Endothelial cell of umbilical vein (primary cell): ENCODE measurements at regions of chr1 and their contacts with region 1.

Region 1: GRCh38 chr1:165827268-165828102 is at the start of gene UCK2:
- DNase-seq: peak; percentile 81
- H3K4me3 ChIP-seq: peak within 1 kb of the TSS; percentile 77 to 93 (median 86)
- H3K27ac ChIP-seq: peak within 1 kb of the TSS; percentile 95
- H3K4me1 ChIP-seq: peaks cover 13% of the 10 kb centered on the region
- H3K27me3 ChIP-seq: no peaks in the 10 kb centered on the region
- CTCF ChIP-seq: peak in 1 of 2 donors; percentile 29
- POLR2A ChIP-seq: peak; percentile 49
- total RNA-seq, gene UCK2: 62.3 and 68.4 TPM in 2 replicates

Region 2: GRCh38 chr1:165630629-165631341 is 196.7 kb before region 1 on chr1 and contains the start of gene MGST3:
- CTCF ChIA-PET with region 1: no interaction called
- POLR2A ChIA-PET with region 1: no interaction called
- dilution Hi-C with region 1: no loop called
- intact Hi-C with region 1: loop called (anchors 1 kb)
- DNase-seq: peak; percentile 97
- H3K4me3 ChIP-seq: peak within 1 kb of the TSS; percentile 88 to 94 (median 89)
- H3K27ac ChIP-seq: peak within 1 kb of the TSS; percentile 73
- H3K4me1 ChIP-seq: peaks cover 19% of the 10 kb centered on the region
- H3K27me3 ChIP-seq: peaks cover 4 to 9% of the 10 kb centered on the region in 2 experiments
- CTCF ChIP-seq: no peak
- POLR2A ChIP-seq: peak; percentile 86
- total RNA-seq, gene MGST3: 164 and 196 TPM in 2 replicates

Region 3: GRCh38 chr1:165768513-165769394 is 58.7 kb before region 1 on chr1 and contains the start of gene TMCO1:
- CTCF ChIA-PET with region 1: interaction called, 4 read pairs
- POLR2A ChIA-PET with region 1: interaction called, 4 read pairs
- dilution Hi-C with region 1: no loop called
- intact Hi-C with region 1: loop called (anchors 1 kb)
- DNase-seq: peak; percentile 97
- H3K4me3 ChIP-seq: peak within 1 kb of the TSS; percentile 37 to 92 (median 75)
- H3K27ac ChIP-seq: peak within 1 kb of the TSS; percentile 68
- H3K4me1 ChIP-seq: peaks cover 18% of the 10 kb centered on the region
- H3K27me3 ChIP-seq: no peaks in the 10 kb centered on the region
- CTCF ChIP-seq: peak in 1 of 2 donors; percentile 20
- POLR2A ChIP-seq: peak; percentile 93
- total RNA-seq, gene TMCO1: 80.0 and 86.0 TPM in 2 replicates

Region 4: GRCh38 chr1:165884690-165885304 is 57.3 kb after region 1 on chr1:
- CTCF ChIA-PET with region 1: interaction called, 11 read pairs
- POLR2A ChIA-PET with region 1: interaction called, 4 read pairs
- dilution Hi-C with region 1: no loop called
- intact Hi-C with region 1: loop called (anchors 1 kb)
- DNase-seq: peak; percentile 70
- H3K4me3 ChIP-seq: no peak overlapping the region
- H3K27ac ChIP-seq: peak overlapping the region; percentile 83
- H3K4me1 ChIP-seq: peaks cover 26% of the 10 kb centered on the region
- H3K27me3 ChIP-seq: no peaks in the 10 kb centered on the region
- CTCF ChIP-seq: no peak
- POLR2A ChIP-seq: no peak

Region 5: DNA sequence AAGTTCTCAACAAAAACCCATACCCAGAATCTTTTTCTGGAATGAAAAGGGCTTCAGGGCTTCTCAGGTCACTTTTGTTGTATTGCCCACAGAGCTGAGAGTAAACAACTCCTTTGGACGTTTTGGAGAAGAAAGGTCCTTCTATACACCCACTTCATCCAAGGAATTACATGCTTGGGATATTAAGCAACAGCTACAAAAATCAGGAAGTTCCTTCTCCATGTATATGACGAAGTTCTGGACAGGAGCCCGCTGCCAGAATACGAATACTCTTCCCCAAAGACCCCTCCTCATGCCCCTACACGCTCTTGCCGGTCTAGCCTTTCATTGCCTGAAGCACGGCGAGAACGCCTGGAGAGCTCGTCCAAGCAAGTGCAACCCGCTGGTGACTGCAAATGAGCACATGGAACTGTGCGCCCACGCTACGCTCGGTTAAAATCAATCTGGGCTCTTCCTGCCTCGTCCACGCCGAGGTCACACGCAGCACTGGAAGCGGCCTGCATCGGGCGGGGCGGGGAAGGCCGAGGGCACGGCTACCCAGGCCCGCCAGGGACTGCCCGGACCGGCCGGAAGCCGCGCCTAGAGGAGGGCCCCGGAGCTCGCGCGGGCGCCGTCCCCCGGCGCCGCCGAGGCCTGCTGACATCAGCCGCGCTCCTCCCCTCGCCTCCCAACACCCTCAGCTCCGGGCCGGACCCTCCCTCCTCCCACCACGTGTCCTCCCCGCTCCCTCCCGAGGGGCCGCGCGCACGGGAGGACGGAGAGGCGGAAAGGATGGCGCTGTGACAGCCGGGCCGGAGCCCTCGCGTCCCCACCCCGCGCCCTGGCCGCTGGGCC is 1011.5 kb after region 1 on chr1 and contains the start of gene POGK:
- CTCF ChIA-PET with region 1: no interaction called
- POLR2A ChIA-PET with region 1: no interaction called
- dilution Hi-C with region 1: no loop called
- intact Hi-C with region 1: loop called (anchors 5 kb)
- DNase-seq: peak; percentile 90
- H3K4me3 ChIP-seq: peak within 1 kb of the TSS; percentile 35 to 63 (median 54)
- H3K27ac ChIP-seq: peak within 1 kb of the TSS; percentile 14
- H3K4me1 ChIP-seq: peaks cover 18% of the 10 kb centered on the region
- H3K27me3 ChIP-seq: no peaks in the 10 kb centered on the region
- CTCF ChIP-seq: no peak
- POLR2A ChIP-seq: peak; percentile 81
- total RNA-seq, gene POGK: 31.8 and 32.2 TPM in 2 replicates